Activated T-helper 1 cell treated with anti-CD3 and anti-CD28 coated beads, Interleukin-12 subunit alpha, Interleukin-12 subunit beta, Interleukin-2, Interleukin-4 antibody, amounts not matched to agents 30 ng/mL and 10 ng/mL and 1 ng/mL, durations not matched to agents 14 hours and 24 hours and 36 hours (primary cell): ENCODE measurements at regions of chr10 and their contacts with region 1.

Region 1: GRCh38 chr10:70197235-70197945 is 27.1 kb upstream of the SAR1A start:
- DNase-seq: no peak
- H3K4me3 Mint-ChIP-seq: no peak overlapping the region
- H3K27ac Mint-ChIP-seq: peak overlapping the region; percentile 52
- H3K4me1 Mint-ChIP-seq: peaks cover 27% of the 10 kb centered on the region
- H3K27me3 Mint-ChIP-seq: no peaks in the 10 kb centered on the region

Region 2: DNA sequence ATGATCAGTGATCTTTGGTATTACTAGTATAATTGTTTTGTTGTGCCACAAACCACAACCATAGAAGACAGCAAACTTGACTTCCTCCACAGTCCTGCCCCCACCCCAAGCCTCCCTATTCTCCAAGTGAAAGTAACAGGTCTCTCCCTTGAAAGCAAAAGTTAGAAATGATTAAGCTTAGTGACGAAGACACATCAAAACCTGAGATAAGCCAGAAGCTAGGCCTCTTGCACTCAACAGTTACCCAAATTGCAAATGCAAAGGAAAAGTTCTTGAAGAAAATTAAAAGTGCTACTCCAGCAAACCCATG is 34.5 kb before region 1 on chr10:
- intact Hi-C with region 1: loop called (anchors 5 kb)
- DNase-seq: peak; percentile 58
- H3K4me3 Mint-ChIP-seq: peak overlapping the region; percentile 32
- H3K27ac Mint-ChIP-seq: peak overlapping the region; percentile 82
- H3K4me1 Mint-ChIP-seq: peaks cover 68% of the 10 kb centered on the region
- H3K27me3 Mint-ChIP-seq: no peaks in the 10 kb centered on the region